ENCODE measurements at regions of chr9 and their contacts with region 1.

Region 1: GRCh38 chr9:128552153-128552743 is at the start of gene SPTAN1:
- DNase-seq: peak; percentile 94
- H3K4me3 ChIP-seq: peak within 1 kb of the TSS; percentile 87
- H3K27ac ChIP-seq: peak within 1 kb of the TSS; percentile 40
- H3K4me1 ChIP-seq: peaks cover 43% of the 10 kb centered on the region
- CTCF ChIP-seq: no peak
- total RNA-seq, gene SPTAN1: 259 and 272 TPM in 2 replicates

Region 2: GRCh38 chr9:128322404-128323211 is 229.6 kb before region 1 on chr9 and contains the starts of genes COQ4 and TRUB2:
- CTCF ChIA-PET with region 1: no interaction called
- POLR2A ChIA-PET with region 1: no interaction called
- intact Hi-C with region 1: loop called (anchors 1 kb)
- DNase-seq: peak; percentile 95
- H3K4me3 ChIP-seq: peak within 1 kb of the TSS; percentile 81
- H3K27ac ChIP-seq: peak within 1 kb of the TSS; percentile 77
- H3K4me1 ChIP-seq: peaks cover 22% of the 10 kb centered on the region
- CTCF ChIP-seq: peak; percentile 31; the same call in 1 of the 2 replicates
- total RNA-seq, gene COQ4: 42.4 and 53.4 TPM in 2 replicates
- total RNA-seq, gene TRUB2: 29.7 and 31.3 TPM in 2 replicates

Region 3: DNA sequence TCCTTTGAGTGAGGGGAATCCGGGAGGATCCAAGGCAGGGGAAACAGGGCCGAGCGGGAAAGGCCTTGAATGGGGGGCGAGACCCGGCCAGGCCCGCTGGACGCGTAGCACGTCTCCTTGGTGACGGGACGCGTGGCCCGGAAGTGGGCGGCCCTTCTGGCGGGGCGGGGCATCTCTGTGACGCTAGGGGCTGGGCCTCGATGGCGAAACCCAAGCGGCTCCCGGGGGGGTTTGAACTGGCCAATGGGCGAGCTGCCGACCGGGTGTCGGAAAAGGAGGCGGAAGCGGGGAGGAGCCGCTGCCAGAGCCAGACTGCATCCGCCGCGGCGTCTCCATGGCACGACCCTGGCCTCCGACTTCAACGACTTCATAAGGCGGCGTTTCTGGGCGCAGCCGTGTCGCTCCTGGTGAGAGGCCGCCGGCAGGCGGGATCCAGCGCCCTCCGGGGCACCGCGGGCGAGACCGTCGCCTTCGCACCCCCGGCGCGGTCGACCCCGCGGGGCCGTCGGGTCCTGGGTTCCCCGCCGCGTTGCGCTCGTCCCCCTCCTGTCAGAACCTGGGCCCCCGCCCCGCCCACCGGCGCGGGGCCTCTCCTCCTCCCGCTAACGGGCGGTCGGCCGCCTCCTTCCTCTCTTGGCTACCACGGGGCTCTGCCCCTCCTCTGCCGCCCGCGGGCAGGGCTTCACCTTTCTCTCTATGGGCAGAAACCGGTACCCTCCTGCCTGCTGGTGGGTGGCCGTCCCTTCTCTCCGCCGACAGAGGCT is 96.2 kb before region 1 on chr9 and contains the start of gene ODF2:
- CTCF ChIA-PET with region 1: interaction called, 3 read pairs
- POLR2A ChIA-PET with region 1: interaction called, 5 read pairs
- intact Hi-C with region 1: loop called (anchors 2 kb)
- DNase-seq: peak; percentile 98
- H3K4me3 ChIP-seq: peak within 1 kb of the TSS; percentile 76
- H3K27ac ChIP-seq: peak within 1 kb of the TSS; percentile 75
- H3K4me1 ChIP-seq: peaks cover 10% of the 10 kb centered on the region
- CTCF ChIP-seq: no peak
- total RNA-seq, gene ODF2: 84.4 and 94.3 TPM in 2 replicates

Region 4: GRCh38 chr9:128688512-128689292 is 136.5 kb after region 1 on chr9 and contains the start of gene SET:
- CTCF ChIA-PET with region 1: no interaction called
- POLR2A ChIA-PET with region 1: interaction called, 3 read pairs
- intact Hi-C with region 1: loop called (anchors 2 kb)
- DNase-seq: peak; percentile 96
- H3K4me3 ChIP-seq: peak within 1 kb of the TSS; percentile 92
- H3K27ac ChIP-seq: peak within 1 kb of the TSS; percentile 91
- H3K4me1 ChIP-seq: peaks cover 40% of the 10 kb centered on the region
- CTCF ChIP-seq: no peak
- total RNA-seq, gene SET: 598 and 1,041 TPM in 2 replicates

Region 5: GRCh38 chr9:128818099-128818838 is 266.0 kb after region 1 on chr9 and contains the start of gene ENDOG:
- CTCF ChIA-PET with region 1: no interaction called
- POLR2A ChIA-PET with region 1: no interaction called
- intact Hi-C with region 1: loop called (anchors 2 kb)
- DNase-seq: peak; percentile 98
- H3K4me3 ChIP-seq: peak within 1 kb of the TSS; percentile 71
- H3K27ac ChIP-seq: no peak within 1 kb of the TSS
- H3K4me1 ChIP-seq: peaks cover 23% of the 10 kb centered on the region
- CTCF ChIP-seq: peak; percentile 87
- total RNA-seq, gene ENDOG: 31.9 and 35.2 TPM in 2 replicates

Measured in OCI-LY7 (cell line).